Mucosa of descending colon (tissue), 3 donors: ENCODE measurements at regions of chr22 and their contacts with region 1.

Region 1: DNA sequence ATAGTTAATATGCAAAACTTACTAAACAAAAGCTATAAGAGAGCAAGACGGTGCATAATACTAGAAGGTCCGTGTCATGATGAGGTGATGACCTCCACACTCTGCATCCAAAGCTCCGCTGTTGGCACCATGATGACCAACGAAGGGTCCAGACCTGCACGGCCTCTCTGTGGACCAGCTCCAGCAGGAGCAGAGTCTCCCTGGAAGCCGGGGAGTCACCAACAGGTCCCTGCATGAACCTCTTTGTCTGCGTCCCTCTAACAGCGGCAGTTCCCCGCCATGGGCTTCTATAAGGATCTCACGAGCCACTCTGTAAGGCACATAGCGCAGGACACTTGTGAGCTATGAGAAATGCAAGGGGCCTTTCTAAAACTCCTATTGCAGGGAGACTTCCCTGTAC is 517.3 kb downstream of the BRD1 start:
- DNase-seq: no peak
- ATAC-seq: no peak
- H3K4me3 ChIP-seq: no peak overlapping the region
- H3K4me1 ChIP-seq: no peaks in the 10 kb centered on the region
- CTCF ChIP-seq: no peak

Region 2: DNA sequence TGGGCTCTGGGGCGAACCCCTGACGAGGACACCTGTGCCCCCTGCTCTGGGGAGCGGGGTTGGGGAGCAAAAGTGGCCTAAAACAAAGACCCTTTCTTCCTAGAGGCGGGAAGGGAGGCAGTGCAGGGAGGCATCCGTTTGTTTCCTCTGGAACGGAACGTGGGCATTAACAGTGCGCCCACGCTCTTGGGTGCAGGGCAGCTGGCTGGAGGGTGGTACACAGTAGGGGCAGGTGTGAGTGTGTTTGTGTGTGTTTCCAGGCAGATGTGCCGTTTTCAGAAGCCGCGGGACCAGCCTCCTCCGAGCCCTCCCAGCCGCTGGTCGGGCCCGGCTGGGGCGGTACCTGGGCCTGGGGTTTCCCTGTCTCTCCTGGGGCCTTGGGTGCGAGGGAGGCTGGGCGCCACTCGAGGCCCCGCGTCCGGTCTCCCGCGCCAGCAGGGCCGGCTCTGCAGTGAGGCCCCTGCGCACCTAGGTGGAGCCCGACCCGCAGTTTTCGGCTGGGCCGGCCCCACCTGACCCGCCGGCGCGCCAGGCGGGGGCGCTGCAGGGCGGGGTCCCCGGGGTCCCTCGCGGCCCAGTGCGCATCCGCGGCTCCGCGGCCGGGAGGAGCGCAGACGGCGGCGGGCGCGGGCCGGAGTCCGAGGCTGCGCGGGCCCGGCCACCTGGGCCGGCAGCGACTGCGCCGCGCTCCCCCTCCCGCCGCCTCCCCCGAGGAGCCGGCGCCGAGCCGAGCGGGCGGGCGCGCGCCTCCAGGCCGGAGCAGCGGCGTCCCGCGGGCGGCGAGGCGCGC is 735.4 kb before region 1 on chr22:
- intact Hi-C with region 1: loop called in 1 of 2 experiments (anchors 10 kb)
- DNase-seq: peak; percentile 14 to 46 (median 35)
- ATAC-seq: peak; percentile 63
- H3K4me3 ChIP-seq: no peak overlapping the region
- H3K4me1 ChIP-seq: no peaks in the 10 kb centered on the region
- CTCF ChIP-seq: no peak

Region 3: DNA sequence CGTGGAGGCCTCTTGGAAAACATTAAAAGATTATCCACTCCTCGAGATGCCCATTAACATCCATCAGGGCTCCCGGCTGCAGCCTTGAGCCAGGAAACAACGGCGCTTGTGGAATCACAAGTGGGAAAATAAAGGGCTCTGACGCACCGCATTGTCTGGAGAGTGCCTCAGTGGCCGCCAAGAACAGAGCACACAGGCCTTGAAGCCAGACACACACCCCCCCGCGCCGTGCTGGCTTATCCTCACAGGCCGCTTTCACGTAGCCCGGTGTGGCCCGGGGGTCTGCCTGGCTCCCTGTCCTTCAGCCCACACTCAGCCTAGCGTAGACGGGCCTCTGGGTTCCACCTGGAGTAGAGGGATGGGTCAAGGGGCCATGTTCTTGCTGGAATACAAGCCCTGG is 503.2 kb before region 1 on chr22:
- intact Hi-C with region 1: no loop called
- DNase-seq: no peak
- ATAC-seq: no peak
- H3K4me3 ChIP-seq: no peak overlapping the region
- H3K4me1 ChIP-seq: no peaks in the 10 kb centered on the region
- CTCF ChIP-seq: no peak